ENCODE measurements at regions of chr4 and their contacts with region 1.

Region 1: DNA sequence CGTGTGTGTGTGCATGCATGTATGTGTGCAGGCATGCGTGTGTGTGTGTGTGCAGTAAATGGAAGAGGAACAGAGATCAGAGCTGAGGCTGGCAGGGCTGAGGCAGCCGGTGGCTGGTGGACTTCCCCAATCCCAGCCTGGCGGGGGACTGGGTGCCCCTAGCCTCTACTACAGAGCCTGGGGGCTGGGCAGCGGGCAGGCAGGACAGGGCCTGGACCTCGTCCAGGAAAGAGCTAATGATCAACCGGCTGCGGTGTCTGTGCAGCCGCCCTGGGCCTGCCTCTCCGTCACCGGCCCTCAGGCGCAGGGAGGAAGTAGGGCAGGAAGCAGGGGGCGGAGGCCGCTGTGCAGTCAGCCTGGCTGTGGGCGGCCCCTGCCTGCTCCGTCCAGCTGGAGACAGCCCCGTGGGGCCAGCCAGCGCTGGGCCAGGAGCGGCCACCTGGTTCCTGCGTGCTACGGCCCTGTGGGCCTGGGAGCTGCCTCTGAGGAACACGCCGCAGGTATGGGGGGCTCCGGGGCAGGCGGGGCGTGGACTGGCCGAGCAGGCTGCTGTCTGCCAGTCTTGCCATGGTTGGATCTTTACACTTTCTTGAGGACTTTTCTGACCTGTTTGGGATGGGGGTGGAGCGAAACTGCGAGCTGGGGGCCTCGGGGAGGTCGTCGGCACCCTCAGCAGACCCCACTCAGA is at the start of gene SH3TC1:
- DNase-seq: peak; percentile 62
- H3K4me3 Mint-ChIP-seq: peak within 1 kb of the TSS; percentile 90
- H3K27ac Mint-ChIP-seq: peak within 1 kb of the TSS; percentile 81
- H3K4me1 Mint-ChIP-seq: peaks cover 31% of the 10 kb centered on the region
- H3K27me3 Mint-ChIP-seq: peaks cover 7% of the 10 kb centered on the region
- total RNA-seq, gene SH3TC1: 14.2 and 14.8 TPM in 2 replicates

Region 2: GRCh38 chr4:6658597-6659075 is 1540.4 kb before region 1 on chr4:
- intact Hi-C with region 1: loop called (anchors 5 kb)
- DNase-seq: no peak
- H3K4me3 Mint-ChIP-seq: peak overlapping the region; percentile 21
- H3K27ac Mint-ChIP-seq: no peak overlapping the region
- H3K4me1 Mint-ChIP-seq: peaks cover 6% of the 10 kb centered on the region
- H3K27me3 Mint-ChIP-seq: peaks cover 32% of the 10 kb centered on the region

Region 3: GRCh38 chr4:8035371-8035780 is 163.7 kb before region 1 on chr4:
- intact Hi-C with region 1: no loop called
- DNase-seq: no peak
- H3K4me3 Mint-ChIP-seq: no peak overlapping the region
- H3K27ac Mint-ChIP-seq: no peak overlapping the region
- H3K4me1 Mint-ChIP-seq: peaks cover 5% of the 10 kb centered on the region
- H3K27me3 Mint-ChIP-seq: peaks cover 12% of the 10 kb centered on the region

Region 4: GRCh38 chr4:8158710-8159536 is 40.1 kb before region 1 on chr4 and contains the start of gene ABLIM2:
- intact Hi-C with region 1: loop called (anchors 1 kb)
- DNase-seq: peak; percentile 98
- H3K4me3 Mint-ChIP-seq: peak within 1 kb of the TSS; percentile 97
- H3K27ac Mint-ChIP-seq: peak within 1 kb of the TSS; percentile 24
- H3K4me1 Mint-ChIP-seq: peaks cover 5% of the 10 kb centered on the region
- H3K27me3 Mint-ChIP-seq: peaks cover 23% of the 10 kb centered on the region
- total RNA-seq, gene ABLIM2: 0.32 and 0.60 TPM in 2 replicates

Region 5: DNA sequence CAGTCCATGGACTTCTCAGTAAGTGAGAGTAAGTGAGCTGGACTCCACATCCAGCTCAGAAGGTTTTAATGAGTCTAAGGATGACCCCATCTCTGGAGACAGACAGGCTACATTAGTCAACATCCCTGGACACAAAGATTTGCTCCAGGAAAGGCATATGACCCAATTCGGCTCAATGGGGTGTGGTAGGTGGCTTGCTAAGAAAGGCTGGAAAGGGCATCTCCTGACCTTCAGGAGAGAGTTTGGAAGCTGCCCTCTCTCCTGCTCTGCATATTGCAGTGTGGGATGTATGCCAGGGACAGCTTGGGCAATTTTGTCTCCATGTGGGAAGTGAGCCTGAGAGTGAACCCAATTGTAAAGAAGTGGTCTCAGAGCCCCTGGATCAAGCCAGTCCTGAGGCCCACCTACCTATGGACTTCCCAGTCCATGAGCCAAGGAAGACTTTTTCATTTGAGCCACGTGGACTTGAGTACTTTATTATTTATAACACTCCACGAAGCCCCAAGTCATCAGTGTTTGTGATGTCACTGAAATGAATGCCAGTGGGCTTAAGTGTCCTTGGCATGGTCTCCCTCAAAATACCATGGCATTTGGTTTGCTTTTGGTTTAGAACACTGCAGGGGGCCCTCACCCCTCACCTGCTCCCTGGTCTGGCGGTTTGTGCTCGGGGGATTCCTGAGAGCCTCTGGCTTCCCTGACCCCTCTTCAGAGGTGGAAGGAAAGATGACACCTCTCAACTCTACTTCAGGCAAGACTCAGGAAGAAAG is 30.0 kb before region 1 on chr4:
- intact Hi-C with region 1: no loop called
- DNase-seq: no peak
- H3K4me3 Mint-ChIP-seq: no peak overlapping the region
- H3K27ac Mint-ChIP-seq: no peak overlapping the region
- H3K4me1 Mint-ChIP-seq: no peaks in the 10 kb centered on the region
- H3K27me3 Mint-ChIP-seq: no peaks in the 10 kb centered on the region

Region 6: DNA sequence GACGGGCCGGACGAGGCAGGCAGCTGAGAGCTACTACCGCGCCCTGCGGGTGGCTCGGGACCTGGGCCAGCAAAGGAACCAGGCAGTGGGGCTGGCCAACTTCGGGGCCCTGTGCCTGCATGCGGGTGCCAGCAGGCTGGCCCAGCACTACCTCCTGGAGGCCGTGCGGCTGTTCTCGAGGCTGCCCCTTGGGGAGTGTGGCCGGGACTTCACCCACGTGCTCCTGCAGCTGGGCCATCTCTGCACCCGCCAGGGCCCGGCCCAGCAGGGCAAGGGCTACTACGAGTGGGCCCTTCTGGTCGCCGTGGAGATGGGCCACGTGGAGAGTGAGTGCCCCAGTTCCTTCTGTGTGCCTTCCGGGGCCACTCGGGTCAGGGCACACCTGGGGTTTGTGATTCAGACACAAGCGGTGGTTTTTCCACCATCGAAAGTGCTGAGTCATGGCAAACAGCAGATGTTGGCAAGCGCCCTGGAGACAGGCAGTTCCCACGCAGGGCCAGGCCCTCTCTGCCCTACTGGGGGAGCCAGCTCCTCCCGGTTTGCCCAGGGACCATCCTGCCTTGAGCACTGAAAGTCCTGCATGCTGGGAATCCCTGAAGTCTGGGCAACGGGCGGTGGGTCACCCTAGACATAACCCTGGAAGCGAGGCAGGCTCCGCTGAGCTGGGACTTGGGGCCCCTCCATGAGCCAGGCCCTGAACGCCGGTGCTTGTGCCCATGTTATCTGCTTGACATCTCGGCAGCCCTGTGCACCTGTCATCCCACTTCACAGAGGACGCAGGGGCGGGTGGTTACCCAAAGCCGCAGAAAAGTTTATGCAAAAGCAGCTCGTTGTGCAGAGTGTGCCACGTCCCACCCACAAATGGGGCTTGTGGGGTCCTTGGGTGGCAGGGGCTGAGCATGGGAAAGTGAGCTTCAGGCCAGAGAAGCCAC is 29.5 kb after region 1 on chr4:
- intact Hi-C with region 1: loop called (anchors 2 kb)
- DNase-seq: peak; percentile 41
- H3K4me3 Mint-ChIP-seq: no peak overlapping the region
- H3K27ac Mint-ChIP-seq: peak overlapping the region; percentile 17
- H3K4me1 Mint-ChIP-seq: peaks cover 11% of the 10 kb centered on the region
- H3K27me3 Mint-ChIP-seq: no peaks in the 10 kb centered on the region